Activated CD4-positive, alpha-beta T cell treated with anti-CD3 and anti-CD28 coated beads for 36 hours (primary cell): ENCODE measurements at regions of chr6 and their contacts with region 1.

Region 1: DNA sequence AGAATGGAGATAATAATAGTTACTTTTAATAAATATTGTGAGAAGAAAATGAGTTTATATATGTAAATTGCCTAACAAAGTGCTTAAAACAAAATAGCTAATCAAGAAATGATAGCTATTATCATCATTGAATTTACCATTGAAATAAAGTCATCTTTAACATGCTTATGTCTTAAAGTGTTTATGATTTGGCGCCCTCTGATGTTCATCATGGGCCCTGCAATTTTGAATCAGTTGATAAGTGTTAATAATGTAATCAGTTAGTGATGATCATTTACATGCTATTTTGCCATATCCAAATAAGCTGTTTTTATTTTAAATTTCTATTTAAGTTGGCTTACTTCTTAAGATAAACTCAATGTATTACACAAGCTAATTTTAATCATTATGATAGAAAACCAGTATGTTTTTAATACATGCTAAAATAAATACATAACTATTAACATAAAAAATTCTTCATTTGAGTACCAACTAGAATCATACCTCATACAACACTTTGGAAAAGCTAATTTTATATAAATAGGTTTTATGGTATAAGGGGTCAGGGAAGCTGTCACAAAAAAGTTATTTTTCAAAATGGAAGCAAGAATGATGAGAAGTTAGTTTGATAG is 39.2 kb upstream of the TPD52L1 start:
- DNase-seq: peak; percentile 66
- ATAC-seq: no peak
- H3K4me3 Mint-ChIP-seq: no peak overlapping the region
- H3K27ac Mint-ChIP-seq: no peak overlapping the region
- H3K4me1 Mint-ChIP-seq: no peaks in the 10 kb centered on the region
- H3K27me3 Mint-ChIP-seq: no peaks in the 10 kb centered on the region

Region 2: DNA sequence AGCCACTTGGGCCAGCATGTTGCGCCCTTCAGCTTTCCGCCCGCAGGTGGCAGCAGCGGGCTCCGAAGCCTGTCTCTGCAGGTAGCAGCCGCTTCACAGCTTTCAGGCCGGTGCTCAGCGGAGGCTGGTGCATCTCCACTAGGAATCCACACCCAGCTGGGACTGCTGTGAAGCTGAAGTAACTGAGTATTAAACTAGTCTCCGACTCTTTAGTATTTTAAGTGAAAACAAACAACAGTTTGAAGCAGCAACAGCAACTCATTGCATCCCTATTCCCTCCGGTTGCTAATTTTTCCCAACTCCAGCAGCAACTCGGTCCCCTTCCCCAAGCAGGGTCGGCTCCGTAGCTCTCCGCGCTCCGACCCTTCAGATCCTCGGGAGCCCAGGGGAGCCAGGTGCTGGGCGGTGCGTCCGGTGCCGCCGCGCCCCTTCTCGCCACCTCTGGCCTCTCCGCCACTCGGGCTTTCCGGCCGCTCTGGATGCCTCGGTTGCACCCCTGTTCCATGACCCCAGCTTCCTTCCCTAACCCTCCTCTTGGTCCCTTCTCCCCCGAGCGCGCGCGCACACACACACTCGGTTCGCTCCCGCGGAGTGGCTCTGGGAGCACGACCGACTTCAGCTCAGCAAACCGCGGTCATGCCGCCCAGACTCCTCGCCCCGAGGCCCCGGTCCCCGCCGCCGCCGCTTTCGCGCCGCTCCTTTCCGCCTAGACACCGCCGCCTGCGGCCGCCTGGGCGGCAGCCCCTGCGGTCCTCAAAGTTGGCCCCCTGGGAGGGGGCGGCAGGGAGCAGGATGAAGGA is 1311.5 kb before region 1 on chr6:
- CTCF ChIA-PET with region 1: interaction called, 3 read pairs
- POLR2A ChIA-PET with region 1: no interaction called
- intact Hi-C with region 1: loop called in 1 of 2 experiments (anchors 1 kb)
- DNase-seq: peak; percentile 85
- ATAC-seq: peak; percentile 92
- H3K4me3 Mint-ChIP-seq: peak overlapping the region; percentile 38
- H3K27ac Mint-ChIP-seq: no peak overlapping the region
- H3K4me1 Mint-ChIP-seq: peaks cover 12% of the 10 kb centered on the region
- H3K27me3 Mint-ChIP-seq: peaks cover 38% of the 10 kb centered on the region

Region 3: DNA sequence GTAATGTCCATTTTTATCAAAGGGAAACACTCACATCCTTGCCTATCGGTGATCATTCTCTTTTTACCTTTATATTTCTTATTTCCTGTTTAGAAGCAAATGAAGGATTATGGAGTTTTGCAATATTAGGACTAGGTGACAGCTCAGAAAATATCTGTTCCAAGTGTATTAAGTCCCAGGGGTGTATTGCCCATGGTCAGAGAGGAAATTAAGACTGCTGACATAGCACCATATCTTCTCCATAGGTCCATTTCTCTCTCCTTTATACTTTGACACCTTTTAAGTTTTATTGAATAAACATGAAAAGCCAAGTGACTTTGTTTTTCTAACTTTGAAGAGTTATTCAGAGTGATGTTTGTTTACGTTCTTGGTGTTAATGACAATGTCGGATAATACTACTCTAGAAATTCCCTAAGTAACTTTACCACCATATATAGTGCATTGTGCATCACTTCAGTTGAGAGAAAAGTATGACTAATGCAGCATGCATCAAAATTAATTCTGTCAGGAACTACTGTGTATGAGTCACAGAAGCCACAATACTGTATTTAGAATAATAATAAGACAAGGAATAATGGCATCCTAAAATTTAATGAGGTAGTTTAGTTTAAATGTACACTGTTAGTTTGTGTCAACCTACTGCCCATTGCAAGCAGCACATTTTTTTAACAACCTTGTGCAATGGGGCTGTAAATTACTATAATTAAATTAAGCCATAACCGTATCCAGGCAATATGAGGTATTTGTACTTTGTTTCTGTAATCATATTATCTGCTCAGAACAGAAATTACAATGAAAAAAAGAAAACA is 626.5 kb before region 1 on chr6:
- CTCF ChIA-PET with region 1: no interaction called
- POLR2A ChIA-PET with region 1: no interaction called
- intact Hi-C with region 1: no loop called
- DNase-seq: no peak
- ATAC-seq: no peak
- H3K4me3 Mint-ChIP-seq: no peak overlapping the region
- H3K27ac Mint-ChIP-seq: no peak overlapping the region
- H3K4me1 Mint-ChIP-seq: no peaks in the 10 kb centered on the region
- H3K27me3 Mint-ChIP-seq: no peaks in the 10 kb centered on the region

Region 4: GRCh38 chr6:124870611-124871459 is 243.5 kb before region 1 on chr6:
- CTCF ChIA-PET with region 1: interaction called, 14 read pairs
- POLR2A ChIA-PET with region 1: no interaction called
- intact Hi-C with region 1: loop called (anchors 1 kb)
- DNase-seq: no peak
- ATAC-seq: no peak
- H3K4me3 Mint-ChIP-seq: no peak overlapping the region
- H3K27ac Mint-ChIP-seq: no peak overlapping the region
- H3K4me1 Mint-ChIP-seq: no peaks in the 10 kb centered on the region
- H3K27me3 Mint-ChIP-seq: peaks cover under 1% of the 10 kb centered on the region

Region 5: GRCh38 chr6:124961777-124962611 is 152.4 kb before region 1 on chr6 and contains the start of gene RNF217:
- CTCF ChIA-PET with region 1: no interaction called
- POLR2A ChIA-PET with region 1: no interaction called
- intact Hi-C with region 1: loop called in 1 of 2 experiments (anchors 5 kb)
- DNase-seq: peak; percentile 58
- ATAC-seq: peak; percentile 65
- H3K4me3 Mint-ChIP-seq: peak within 1 kb of the TSS; percentile 70
- H3K27ac Mint-ChIP-seq: peak within 1 kb of the TSS; percentile 28
- H3K4me1 Mint-ChIP-seq: peaks cover 21% of the 10 kb centered on the region
- H3K27me3 Mint-ChIP-seq: peaks cover 44% of the 10 kb centered on the region
- total RNA-seq, gene RNF217: 1.7 to 2.4 TPM

Region 6: GRCh38 chr6:125050663-125051318 is 63.6 kb before region 1 on chr6:
- CTCF ChIA-PET with region 1: no interaction called
- POLR2A ChIA-PET with region 1: no interaction called
- intact Hi-C with region 1: no loop called
- DNase-seq: no peak
- ATAC-seq: no peak
- H3K4me3 Mint-ChIP-seq: no peak overlapping the region
- H3K27ac Mint-ChIP-seq: no peak overlapping the region
- H3K4me1 Mint-ChIP-seq: no peaks in the 10 kb centered on the region
- H3K27me3 Mint-ChIP-seq: no peaks in the 10 kb centered on the region

Region 7: GRCh38 chr6:125129354-125129753 is 15.0 kb after region 1 on chr6:
- CTCF ChIA-PET with region 1: interaction called, 14 read pairs
- POLR2A ChIA-PET with region 1: no interaction called
- intact Hi-C with region 1: no loop called
- DNase-seq: no peak
- ATAC-seq: no peak
- H3K4me3 Mint-ChIP-seq: no peak overlapping the region
- H3K27ac Mint-ChIP-seq: no peak overlapping the region
- H3K4me1 Mint-ChIP-seq: no peaks in the 10 kb centered on the region
- H3K27me3 Mint-ChIP-seq: peaks cover 1% of the 10 kb centered on the region